A549 (cell line): ENCODE measurements at regions of chr2 and their contacts with region 1.

Region 1: GRCh38 chr2:99337113-99338028 is at the start of gene EIF5B:
- DNase-seq: peak; percentile 91 to 97
- ATAC-seq: peak; percentile 86 to 93
- H3K4me3 ChIP-seq: peak within 1 kb of the TSS; percentile 88
- H3K27ac ChIP-seq: peak within 1 kb of the TSS; percentile 91 to 95
- H3K4me1 ChIP-seq: peaks cover 45% of the 10 kb centered on the region
- CTCF ChIP-seq: peak; percentile 78
- EP300 ChIP-seq: no peak
- POLR2A ChIP-seq: peak; percentile 88
- RAD21 ChIP-seq: peak in 1 of 2 experiments; percentile 40; a peak in 1 of 5 replicates
- polyA plus RNA-seq, gene EIF5B: 25.0 and 52.9 TPM in 2 replicates

Region 2: GRCh38 chr2:99141110-99142108 is 196.0 kb before region 1 on chr2 and contains the start of gene C2orf15:
- CTCF ChIA-PET with region 1: no interaction called
- POLR2A ChIA-PET with region 1: interaction called, 12 read pairs
- DNase-seq: peak; percentile 44 to 91
- ATAC-seq: peak; percentile 92 to 95
- H3K4me3 ChIP-seq: peak within 1 kb of the TSS; percentile 63
- H3K27ac ChIP-seq: peak within 1 kb of the TSS; percentile 67 to 89
- H3K4me1 ChIP-seq: peaks cover 10% of the 10 kb centered on the region; the same call in 2 of the 3 replicates
- CTCF ChIP-seq: no peak
- EP300 ChIP-seq: no peak
- POLR2A ChIP-seq: no peak; the same call in 1 of the 2 replicates
- RAD21 ChIP-seq: no peak
- polyA plus RNA-seq, gene C2orf15: 1.2 and 1.6 TPM in 2 replicates

Region 3: GRCh38 chr2:99154643-99155536 is 182.5 kb before region 1 on chr2 and contains the starts of genes LIPT1 and TSGA10:
- CTCF ChIA-PET with region 1: no interaction called
- POLR2A ChIA-PET with region 1: interaction called, 15 read pairs
- DNase-seq: peak; percentile 88 to 94
- ATAC-seq: peak; percentile 98 to 99
- H3K4me3 ChIP-seq: peak within 1 kb of the TSS; percentile 59
- H3K27ac ChIP-seq: peak within 1 kb of the TSS; percentile 83 to 92
- H3K4me1 ChIP-seq: peaks cover 10% of the 10 kb centered on the region; the same call in 1 of the 3 replicates
- CTCF ChIP-seq: 0 out of 3 replicates have a peak, but pooled peaks have one; percentile 20
- EP300 ChIP-seq: no peak
- POLR2A ChIP-seq: peak; percentile 85
- RAD21 ChIP-seq: no peak
- polyA plus RNA-seq, gene LIPT1: 10.0 and 10.9 TPM in 2 replicates
- polyA plus RNA-seq, gene TSGA10: 3.7 and 4.3 TPM in 2 replicates

Region 4: GRCh38 chr2:99180755-99181623 is 156.4 kb before region 1 on chr2 and contains the starts of genes MITD1 and MRPL30:
- CTCF ChIA-PET with region 1: interaction called, 5 read pairs
- POLR2A ChIA-PET with region 1: interaction called, 19 read pairs
- DNase-seq: peak; percentile 72 to 96
- ATAC-seq: peak; percentile 93 to 97
- H3K4me3 ChIP-seq: peak within 1 kb of the TSS; percentile 94
- H3K27ac ChIP-seq: peak within 1 kb of the TSS; percentile 80 to 91
- H3K4me1 ChIP-seq: peaks cover 26% of the 10 kb centered on the region
- CTCF ChIP-seq: no peak
- EP300 ChIP-seq: no peak
- POLR2A ChIP-seq: peak; percentile 86
- RAD21 ChIP-seq: no peak
- polyA plus RNA-seq, gene MITD1: 17.8 and 33.7 TPM in 2 replicates
- polyA plus RNA-seq, gene MRPL30: 36.1 and 43.5 TPM in 2 replicates

Region 5: GRCh38 chr2:99325363-99325762 is 12.0 kb before region 1 on chr2:
- CTCF ChIA-PET with region 1: interaction called, 17 read pairs
- POLR2A ChIA-PET with region 1: interaction called, 7 read pairs
- DNase-seq: no peak
- ATAC-seq: no peak
- H3K4me3 ChIP-seq: no peak overlapping the region
- H3K27ac ChIP-seq: no peak overlapping the region
- H3K4me1 ChIP-seq: no peaks in the 10 kb centered on the region
- CTCF ChIP-seq: no peak
- EP300 ChIP-seq: no peak
- POLR2A ChIP-seq: no peak
- RAD21 ChIP-seq: no peak

Region 6: DNA sequence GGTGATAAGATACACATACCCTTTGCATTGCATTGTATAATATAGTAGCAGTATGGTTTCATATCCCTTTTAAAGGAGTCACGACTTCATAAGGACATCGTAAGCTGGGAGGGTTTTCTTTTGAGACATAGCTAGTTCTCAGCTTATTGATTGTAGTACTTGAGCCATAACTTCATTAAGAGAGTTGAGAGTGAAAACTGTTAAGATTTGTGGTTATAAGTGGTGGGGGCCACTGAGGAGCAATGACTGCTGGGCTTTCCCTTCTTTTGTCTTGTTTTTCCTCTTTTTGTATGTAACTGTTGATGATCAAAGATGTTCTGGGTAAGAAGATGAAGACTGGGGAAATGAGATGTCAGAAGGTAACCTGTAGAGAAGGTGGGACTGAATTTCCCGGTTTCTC is 10.8 kb after region 1 on chr2:
- CTCF ChIA-PET with region 1: interaction called, 18 read pairs
- POLR2A ChIA-PET with region 1: interaction called, 5 read pairs
- DNase-seq: no peak
- ATAC-seq: no peak
- H3K4me3 ChIP-seq: no peak overlapping the region
- H3K27ac ChIP-seq: no peak overlapping the region
- H3K4me1 ChIP-seq: no peaks in the 10 kb centered on the region
- CTCF ChIP-seq: no peak
- EP300 ChIP-seq: no peak
- POLR2A ChIP-seq: no peak
- RAD21 ChIP-seq: no peak